ENCODE measurements at regions of chr18 and their contacts with region 1.

Region 1: DNA sequence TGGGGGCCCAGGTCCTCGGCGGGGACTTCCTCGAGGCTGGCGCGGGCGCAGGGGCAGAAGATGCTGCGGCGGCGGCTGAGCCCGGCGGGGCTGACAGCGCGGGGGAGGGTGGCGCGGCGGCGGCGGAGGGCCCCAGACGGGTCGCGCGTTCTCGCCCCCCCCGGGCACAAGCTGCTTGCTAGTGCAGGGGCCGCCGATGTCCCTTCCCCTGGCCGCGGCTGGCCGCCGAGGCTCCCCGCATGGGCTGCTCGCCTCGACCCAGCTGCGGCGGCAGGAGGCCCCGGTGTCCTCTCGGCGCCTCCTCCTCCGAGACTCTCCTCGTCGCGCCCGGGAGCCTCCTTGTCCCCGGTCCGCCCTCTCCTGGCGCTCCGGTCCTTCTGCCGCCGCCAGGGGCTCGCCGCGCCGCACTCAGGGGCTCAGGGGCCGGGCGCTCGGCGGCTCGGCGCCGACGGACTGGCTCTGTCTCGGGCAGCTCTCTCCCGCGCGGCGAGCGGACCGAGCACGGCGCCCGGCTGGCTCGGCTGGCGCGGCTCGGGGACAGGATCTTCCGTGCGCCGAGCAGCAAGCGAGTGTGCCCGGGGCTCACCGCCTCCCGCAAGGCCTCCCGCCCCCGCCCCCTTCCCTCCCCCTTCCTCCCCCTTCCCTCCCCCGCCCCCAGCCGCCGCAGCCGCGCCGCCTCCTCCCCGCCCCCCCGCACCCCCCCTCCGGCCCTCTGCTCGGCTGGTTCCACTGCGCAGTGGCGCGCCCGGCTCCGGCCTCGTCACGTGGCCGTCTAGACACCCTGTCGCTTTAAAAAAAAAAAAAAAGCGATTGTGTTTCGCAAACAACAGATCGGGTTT is 902 bp upstream of the SMAD7 start:
- DNase-seq: peak; percentile 59 to 79 (median 67)
- ATAC-seq: peak; percentile 69
- H3K4me3 ChIP-seq: peak overlapping the region; percentile 69
- H3K4me3 Mint-ChIP-seq: peak overlapping the region; percentile 84 to 97 (median 94)
- H3K27ac ChIP-seq: peak overlapping the region; percentile 76
- H3K27ac Mint-ChIP-seq: peak overlapping the region; percentile 87 to 99 (median 96)
- H3K4me1 ChIP-seq: peaks cover 26 to 38% of the 10 kb centered on the region in 2 donors
- H3K4me1 Mint-ChIP-seq: peaks cover 24 to 55% (median 44%) of the 10 kb centered on the region in 7 donors
- H3K27me3 ChIP-seq: no peaks in the 10 kb centered on the region
- H3K27me3 Mint-ChIP-seq: peaks cover 0 to 11% (median 0%) of the 10 kb centered on the region in 5 donors

Region 2: GRCh38 chr18:48548011-48548771 is 403.5 kb before region 1 on chr18:
- CTCF ChIA-PET with region 1: no interaction called
- POLR2A ChIA-PET with region 1: no interaction called
- intact Hi-C with region 1: no loop called
- DNase-seq: no peak
- ATAC-seq: no peak
- H3K4me3 ChIP-seq: no peak overlapping the region
- H3K4me3 Mint-ChIP-seq: no peak overlapping the region
- H3K27ac ChIP-seq: no peak overlapping the region
- H3K27ac Mint-ChIP-seq: no peak overlapping the region
- H3K4me1 ChIP-seq: no peaks in the 10 kb centered on the region
- H3K4me1 Mint-ChIP-seq: peaks cover 0 to 6% (median 0%) of the 10 kb centered on the region in 7 donors
- H3K27me3 ChIP-seq: no peaks in the 10 kb centered on the region
- H3K27me3 Mint-ChIP-seq: peaks cover 5 to 37% (median 22%) of the 10 kb centered on the region in 5 donors

Region 3: GRCh38 chr18:48842259-48843061 is 109.2 kb before region 1 on chr18:
- CTCF ChIA-PET with region 1: no interaction called
- POLR2A ChIA-PET with region 1: interaction called, 3 read pairs
- intact Hi-C with region 1: loop called in 1 of 2 experiments (anchors 1 kb)
- DNase-seq: peak; percentile 25 to 85 (median 71)
- ATAC-seq: peak; percentile 86
- H3K4me3 ChIP-seq: peak overlapping the region; percentile 37
- H3K4me3 Mint-ChIP-seq: peak overlapping the region; percentile 51 to 80 (median 75)
- H3K27ac ChIP-seq: peak overlapping the region; percentile 48
- H3K27ac Mint-ChIP-seq: peak overlapping the region; percentile 92 to 97 (median 93)
- H3K4me1 ChIP-seq: peaks cover 58 to 72% of the 10 kb centered on the region in 2 donors
- H3K4me1 Mint-ChIP-seq: peaks cover 55 to 90% (median 72%) of the 10 kb centered on the region in 7 donors
- H3K27me3 ChIP-seq: no peaks in the 10 kb centered on the region
- H3K27me3 Mint-ChIP-seq: no peaks in the 10 kb centered on the region

Region 4: GRCh38 chr18:48934723-48935432 is 16.8 kb before region 1 on chr18:
- CTCF ChIA-PET with region 1: no interaction called
- POLR2A ChIA-PET with region 1: interaction called, 41 read pairs
- intact Hi-C with region 1: loop called (anchors 2 kb)
- DNase-seq: no peak
- ATAC-seq: no peak
- H3K4me3 ChIP-seq: peak overlapping the region; percentile 9
- H3K4me3 Mint-ChIP-seq: peak overlapping the region; percentile 42 to 81 (median 73)
- H3K27ac ChIP-seq: no peak overlapping the region
- H3K27ac Mint-ChIP-seq: peak overlapping the region; percentile 13 to 85 (median 74)
- H3K4me1 ChIP-seq: peaks cover 53 to 72% of the 10 kb centered on the region in 2 donors
- H3K4me1 Mint-ChIP-seq: peaks cover 59 to 98% (median 93%) of the 10 kb centered on the region in 7 donors
- H3K27me3 ChIP-seq: no peaks in the 10 kb centered on the region
- H3K27me3 Mint-ChIP-seq: no peaks in the 10 kb centered on the region

Region 5: GRCh38 chr18:48975649-48976204 is 24.1 kb after region 1 on chr18:
- CTCF ChIA-PET with region 1: interaction called, 3 read pairs
- POLR2A ChIA-PET with region 1: interaction called, 12 read pairs
- intact Hi-C with region 1: loop called (anchors 1 kb)
- DNase-seq: peak in 8 of 9 donors; percentile 29 to 66 (median 38)
- ATAC-seq: peak; percentile 79
- H3K4me3 ChIP-seq: peak overlapping the region; percentile 50
- H3K4me3 Mint-ChIP-seq: peak overlapping the region in 7 of 10 donors; percentile 35 to 83 (median 59)
- H3K27ac ChIP-seq: no peak overlapping the region
- H3K27ac Mint-ChIP-seq: no peak overlapping the region
- H3K4me1 ChIP-seq: no peaks in the 10 kb centered on the region
- H3K4me1 Mint-ChIP-seq: peaks cover 0 to 16% (median 11%) of the 10 kb centered on the region in 7 donors
- H3K27me3 ChIP-seq: no peaks in the 10 kb centered on the region
- H3K27me3 Mint-ChIP-seq: peaks cover 8 to 65% (median 18%) of the 10 kb centered on the region in 5 donors

Region 6: GRCh38 chr18:49100226-49100968 is 148.7 kb after region 1 on chr18:
- CTCF ChIA-PET with region 1: no interaction called
- POLR2A ChIA-PET with region 1: no interaction called
- intact Hi-C with region 1: no loop called
- DNase-seq: no peak
- ATAC-seq: no peak
- H3K4me3 ChIP-seq: no peak overlapping the region
- H3K4me3 Mint-ChIP-seq: no peak overlapping the region
- H3K27ac ChIP-seq: no peak overlapping the region
- H3K27ac Mint-ChIP-seq: peak overlapping the region in 1 of 9 donors; percentile 5
- H3K4me1 ChIP-seq: no peaks in the 10 kb centered on the region
- H3K4me1 Mint-ChIP-seq: peaks cover 0 to 5% (median 2%) of the 10 kb centered on the region in 7 donors
- H3K27me3 ChIP-seq: no peaks in the 10 kb centered on the region
- H3K27me3 Mint-ChIP-seq: no peaks in the 10 kb centered on the region

Region 7: DNA sequence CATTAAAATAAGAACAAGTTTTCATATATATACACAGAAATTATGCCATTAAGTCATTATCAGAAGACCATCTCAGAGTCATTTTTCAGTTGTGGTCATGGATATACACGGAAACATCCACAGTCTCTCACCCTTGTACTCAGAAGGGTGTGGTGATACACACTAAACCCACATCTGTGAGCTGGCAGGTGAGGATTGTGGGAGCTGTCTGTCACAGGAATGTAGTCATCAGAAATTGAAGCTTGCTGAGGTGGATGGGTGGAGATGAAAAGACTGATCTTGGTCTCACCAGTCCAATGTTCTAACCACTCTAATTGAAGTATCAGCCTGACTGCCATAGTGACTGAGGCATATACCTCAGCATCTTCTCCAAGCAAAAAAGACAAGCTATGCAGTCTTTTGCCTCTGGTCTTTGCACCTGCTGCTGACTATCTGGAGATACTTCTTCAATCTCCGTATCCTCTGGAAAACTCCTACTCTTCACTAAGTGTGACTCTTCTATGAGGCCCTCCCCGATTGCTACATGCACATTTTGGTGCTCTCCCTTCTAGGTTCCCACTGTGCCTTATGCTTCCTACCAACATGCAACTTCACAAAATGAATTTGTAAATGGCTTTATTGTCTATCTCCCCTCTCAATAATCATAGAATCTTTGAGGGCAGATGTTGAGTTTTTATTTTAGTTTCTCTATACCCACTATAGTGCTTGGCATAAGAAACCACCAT is 275.9 kb after region 1 on chr18:
- CTCF ChIA-PET with region 1: no interaction called
- POLR2A ChIA-PET with region 1: no interaction called
- intact Hi-C with region 1: loop called in 1 of 2 experiments (anchors 10 kb)
- DNase-seq: peak in 6 of 9 donors; percentile 12 to 35 (median 26)
- ATAC-seq: peak; percentile 80
- H3K4me3 ChIP-seq: no peak overlapping the region
- H3K4me3 Mint-ChIP-seq: peak overlapping the region in 4 of 10 donors; percentile 26 to 31 (median 28)
- H3K27ac ChIP-seq: no peak overlapping the region
- H3K27ac Mint-ChIP-seq: peak overlapping the region in 5 of 9 donors; percentile 7 to 60 (median 16)
- H3K4me1 ChIP-seq: peaks cover 5 to 9% of the 10 kb centered on the region in 2 donors
- H3K4me1 Mint-ChIP-seq: peaks cover 23 to 36% (median 31%) of the 10 kb centered on the region in 7 donors
- H3K27me3 ChIP-seq: no peaks in the 10 kb centered on the region
- H3K27me3 Mint-ChIP-seq: no peaks in the 10 kb centered on the region

Region 8: GRCh38 chr18:49238433-49239042 is 286.9 kb after region 1 on chr18:
- CTCF ChIA-PET with region 1: no interaction called
- POLR2A ChIA-PET with region 1: no interaction called
- intact Hi-C with region 1: no loop called
- DNase-seq: peak in 1 of 9 donors; percentile 2
- ATAC-seq: peak; percentile 29
- H3K4me3 ChIP-seq: no peak overlapping the region
- H3K4me3 Mint-ChIP-seq: no peak overlapping the region
- H3K27ac ChIP-seq: no peak overlapping the region
- H3K27ac Mint-ChIP-seq: no peak overlapping the region
- H3K4me1 ChIP-seq: no peaks in the 10 kb centered on the region
- H3K4me1 Mint-ChIP-seq: peaks cover 0 to 3% (median under 1%) of the 10 kb centered on the region in 7 donors
- H3K27me3 ChIP-seq: no peaks in the 10 kb centered on the region
- H3K27me3 Mint-ChIP-seq: no peaks in the 10 kb centered on the region

Region 9: GRCh38 chr18:49250816-49251388 is 299.2 kb after region 1 on chr18:
- CTCF ChIA-PET with region 1: no interaction called
- POLR2A ChIA-PET with region 1: no interaction called
- intact Hi-C with region 1: no loop called
- DNase-seq: no peak
- ATAC-seq: no peak
- H3K4me3 ChIP-seq: no peak overlapping the region
- H3K4me3 Mint-ChIP-seq: no peak overlapping the region
- H3K27ac ChIP-seq: no peak overlapping the region
- H3K27ac Mint-ChIP-seq: no peak overlapping the region
- H3K4me1 ChIP-seq: no peaks in the 10 kb centered on the region
- H3K4me1 Mint-ChIP-seq: peaks cover 0 to 2% (median 0%) of the 10 kb centered on the region in 7 donors
- H3K27me3 ChIP-seq: no peaks in the 10 kb centered on the region
- H3K27me3 Mint-ChIP-seq: no peaks in the 10 kb centered on the region

Region 10: DNA sequence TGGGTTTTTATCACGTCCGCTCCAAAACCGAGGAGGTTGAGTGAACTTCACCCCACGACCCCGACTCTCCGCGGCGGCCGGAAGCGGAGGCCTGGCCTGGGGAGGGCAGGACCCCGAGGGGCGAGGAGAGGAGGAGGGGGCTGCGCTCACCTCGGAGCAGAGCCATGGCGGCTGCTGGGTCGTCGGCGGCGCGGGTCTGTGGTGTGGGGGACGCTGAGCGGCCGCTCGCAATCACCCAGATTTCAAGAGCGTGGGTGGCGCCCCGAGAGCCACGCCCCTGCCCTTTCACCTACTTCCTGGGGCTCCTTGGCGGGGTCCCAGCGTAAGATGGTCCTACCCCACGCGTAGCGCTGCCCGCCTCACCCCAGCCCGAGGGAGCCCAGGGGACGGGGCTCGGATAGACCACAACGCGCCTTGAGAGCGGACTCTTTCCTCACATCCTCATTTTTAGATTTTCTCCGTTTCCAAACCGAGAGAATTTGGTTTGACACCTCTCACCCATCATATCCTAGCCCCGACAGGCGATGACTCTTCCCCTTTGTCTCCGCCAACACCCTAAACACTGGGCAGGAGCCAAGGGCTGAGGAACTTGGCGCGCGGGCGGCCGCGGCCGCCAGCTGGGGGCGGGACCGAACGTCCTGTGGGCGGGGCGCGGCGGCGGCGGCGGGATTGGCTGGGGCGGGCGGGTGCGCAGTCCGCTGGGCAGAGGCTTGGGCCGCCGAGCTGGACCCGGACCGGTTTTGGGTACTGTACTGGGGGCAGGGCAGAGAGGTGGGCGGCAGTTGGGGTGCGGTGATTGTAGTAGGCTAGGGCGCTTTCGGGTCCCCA is 861.9 kb after region 1 on chr18 and contains the start of gene ACAA2:
- CTCF ChIA-PET with region 1: no interaction called
- POLR2A ChIA-PET with region 1: no interaction called
- intact Hi-C with region 1: loop called in 1 of 2 experiments (anchors 10 kb)
- DNase-seq: peak; percentile 48 to 87 (median 60)
- ATAC-seq: peak; percentile 93
- H3K4me3 ChIP-seq: peak within 1 kb of the TSS; percentile 87
- H3K4me3 Mint-ChIP-seq: peak within 1 kb of the TSS; percentile 89 to 99 (median 96)
- H3K27ac ChIP-seq: peak within 1 kb of the TSS; percentile 90
- H3K27ac Mint-ChIP-seq: peak within 1 kb of the TSS; percentile 91 to 99 (median 97)
- H3K4me1 ChIP-seq: peaks cover 20 to 39% of the 10 kb centered on the region in 2 donors
- H3K4me1 Mint-ChIP-seq: peaks cover 42 to 70% (median 63%) of the 10 kb centered on the region in 7 donors
- H3K27me3 ChIP-seq: no peaks in the 10 kb centered on the region
- H3K27me3 Mint-ChIP-seq: no peaks in the 10 kb centered on the region
- total RNA-seq, gene ACAA2: 15.4 to 94.7 (median 24.4) TPM

Measured in naive thymus-derived CD4-positive, alpha-beta T cell (primary cell).